ENCODE measurements at regions of chr1 and their contacts with region 1.

Region 1: GRCh38 chr1:206912445-206913095 is 9.2 kb downstream of the FCMR start:
- DNase-seq: peak; percentile 79
- ATAC-seq: peak; percentile 53
- H3K4me3 Mint-ChIP-seq: no peak overlapping the region
- H3K27ac Mint-ChIP-seq: no peak overlapping the region
- H3K4me1 Mint-ChIP-seq: peaks cover 40% of the 10 kb centered on the region
- H3K27me3 Mint-ChIP-seq: peaks cover 4% of the 10 kb centered on the region

Region 2: DNA sequence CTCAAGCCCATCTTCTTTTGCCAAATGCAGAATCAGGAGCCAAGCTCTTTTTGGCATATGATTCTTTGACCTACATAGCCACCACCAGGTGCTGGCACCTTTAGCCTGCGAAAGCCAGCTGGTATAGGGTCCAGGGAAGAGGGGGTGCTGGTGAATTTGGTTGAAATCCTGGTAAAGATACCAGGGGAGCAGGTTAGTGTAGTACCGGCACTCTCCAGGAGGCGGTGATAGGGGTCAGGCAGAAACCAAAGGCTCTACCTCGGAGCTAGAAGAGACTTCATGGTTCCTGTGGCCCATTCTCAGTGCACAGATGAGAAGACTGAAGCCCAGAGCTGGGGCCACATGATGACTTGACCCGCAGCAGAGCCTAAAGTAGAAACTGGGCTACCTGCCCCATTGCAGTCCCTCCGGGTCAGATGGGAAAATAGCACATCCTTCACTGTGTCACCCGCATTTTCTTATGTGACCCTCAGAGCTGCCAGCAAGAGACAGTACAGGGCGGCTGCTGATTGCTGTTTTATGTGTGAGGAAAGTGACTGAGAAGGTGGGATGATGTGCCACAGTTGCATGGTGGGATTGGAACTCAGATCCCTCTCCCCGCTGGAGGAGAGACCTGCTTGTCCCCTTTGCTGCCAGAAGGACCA is 177.9 kb before region 1 on chr1:
- CTCF ChIA-PET with region 1: interaction called, 101 read pairs
- DNase-seq: peak; percentile 83
- ATAC-seq: peak; percentile 31
- H3K4me3 Mint-ChIP-seq: no peak overlapping the region
- H3K27ac Mint-ChIP-seq: peak overlapping the region; percentile 21
- H3K4me1 Mint-ChIP-seq: peaks cover 70% of the 10 kb centered on the region
- H3K27me3 Mint-ChIP-seq: no peaks in the 10 kb centered on the region

Region 3: GRCh38 chr1:206816390-206817287 is 95.9 kb before region 1 on chr1:
- CTCF ChIA-PET with region 1: interaction called, 145 read pairs
- DNase-seq: no peak
- ATAC-seq: peak; percentile 93
- H3K4me3 Mint-ChIP-seq: peak overlapping the region; percentile 57
- H3K27ac Mint-ChIP-seq: peak overlapping the region; percentile 88
- H3K4me1 Mint-ChIP-seq: peaks cover 39% of the 10 kb centered on the region
- H3K27me3 Mint-ChIP-seq: no peaks in the 10 kb centered on the region

Region 4: DNA sequence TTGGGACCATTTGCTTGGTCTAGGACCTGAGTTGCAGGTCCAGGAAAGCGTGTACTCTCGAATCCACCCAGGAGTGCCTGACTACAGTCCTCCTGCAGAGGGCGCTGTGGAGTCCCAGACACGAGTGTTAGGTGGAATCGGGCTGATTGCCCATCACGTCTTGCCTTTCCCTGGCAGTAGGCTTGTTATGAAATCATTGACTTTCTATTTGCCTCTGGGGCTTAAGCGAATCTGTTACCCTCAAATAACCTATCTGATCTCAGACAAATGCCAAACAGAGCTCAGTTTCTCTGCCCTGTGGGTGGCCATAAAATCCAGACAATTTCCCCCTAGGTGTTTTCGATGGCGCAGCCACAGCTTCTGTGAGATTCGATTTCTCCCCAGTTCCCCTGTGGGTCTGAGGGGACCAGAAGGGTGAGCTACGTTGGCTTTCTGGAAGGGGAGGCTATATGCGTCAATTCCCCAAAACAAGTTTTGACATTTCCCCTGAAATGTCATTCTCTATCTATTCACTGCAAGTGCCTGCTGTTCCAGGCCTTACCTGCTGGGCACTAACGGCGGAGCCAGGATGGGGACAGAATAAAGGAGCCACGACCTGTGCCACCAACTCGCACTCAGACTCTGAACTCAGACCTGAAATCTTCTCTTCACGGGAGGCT is 47.4 kb before region 1 on chr1 and contains the start of gene IL20:
- CTCF ChIA-PET with region 1: interaction called, 19 read pairs
- DNase-seq: peak; percentile 82
- ATAC-seq: peak; percentile 73
- H3K4me3 Mint-ChIP-seq: no peak within 1 kb of the TSS
- H3K27ac Mint-ChIP-seq: no peak within 1 kb of the TSS
- H3K4me1 Mint-ChIP-seq: peaks cover 4% of the 10 kb centered on the region
- H3K27me3 Mint-ChIP-seq: peaks cover 67% of the 10 kb centered on the region
- total RNA-seq, gene IL20: not detected

Region 5: DNA sequence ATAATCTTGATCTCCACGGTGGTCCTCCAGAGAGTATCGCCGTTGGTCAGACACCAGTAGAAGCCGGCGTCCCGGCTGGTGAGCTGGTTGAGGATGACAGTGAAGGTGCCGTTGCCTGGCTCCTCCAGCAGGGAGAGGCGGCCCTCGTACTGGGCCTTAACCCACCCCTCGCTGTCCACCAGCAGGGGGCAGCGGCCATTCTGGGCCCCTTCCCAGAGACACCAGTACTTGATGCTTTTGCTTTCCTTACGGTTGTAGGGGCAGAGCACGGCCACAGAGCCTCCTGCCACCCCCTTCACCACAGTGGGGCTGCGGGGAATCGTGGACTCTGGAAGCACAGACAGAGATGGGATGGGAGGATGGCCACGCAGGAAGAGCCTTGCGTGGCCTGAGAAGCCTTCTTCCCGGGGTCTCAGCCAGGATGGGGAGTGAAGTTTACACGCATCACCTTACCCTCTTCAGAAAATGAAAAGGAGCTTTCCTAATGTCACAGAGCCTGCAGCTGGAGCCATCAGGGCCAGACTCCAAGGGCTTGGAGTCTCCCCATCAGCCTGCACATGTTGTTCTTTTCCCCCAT is 23.0 kb after region 1 on chr1:
- CTCF ChIA-PET with region 1: interaction called, 39 read pairs
- DNase-seq: peak; percentile 64
- ATAC-seq: peak; percentile 74
- H3K4me3 Mint-ChIP-seq: no peak overlapping the region
- H3K27ac Mint-ChIP-seq: no peak overlapping the region
- H3K4me1 Mint-ChIP-seq: peaks cover 13% of the 10 kb centered on the region
- H3K27me3 Mint-ChIP-seq: no peaks in the 10 kb centered on the region